Left cardiac atrium (tissue), 4 donors: ENCODE measurements at regions of chr17 and their contacts with region 1.

Region 1: GRCh38 chr17:4881761-4882555 is 17.4 kb upstream of the C17orf107 start:
- DNase-seq: peak; percentile 61
- ATAC-seq: peak; percentile 71 to 78

Region 2: GRCh38 chr17:4733073-4733531 is 148.9 kb before region 1 on chr17:
- intact Hi-C with region 1: loop called (anchors 5 to 10 kb)
- DNase-seq: no peak
- ATAC-seq: no peak

Region 3: GRCh38 chr17:4739122-4740024 is 142.6 kb before region 1 on chr17 and contains the starts of genes CXCL16 and ZMYND15:
- intact Hi-C with region 1: loop called (anchors 5 to 10 kb)
- DNase-seq: peak; percentile 68
- ATAC-seq: peak; percentile 76 to 77
- total RNA-seq, gene CXCL16: 6.5 to 8.2 TPM
- total RNA-seq, gene ZMYND15: 0.21 to 0.39 TPM

Region 4: GRCh38 chr17:4789901-4790704 is 91.9 kb before region 1 on chr17:
- intact Hi-C with region 1: loop called (anchors 5 kb)
- DNase-seq: peak; percentile 90
- ATAC-seq: peak; percentile 95

Region 5: DNA sequence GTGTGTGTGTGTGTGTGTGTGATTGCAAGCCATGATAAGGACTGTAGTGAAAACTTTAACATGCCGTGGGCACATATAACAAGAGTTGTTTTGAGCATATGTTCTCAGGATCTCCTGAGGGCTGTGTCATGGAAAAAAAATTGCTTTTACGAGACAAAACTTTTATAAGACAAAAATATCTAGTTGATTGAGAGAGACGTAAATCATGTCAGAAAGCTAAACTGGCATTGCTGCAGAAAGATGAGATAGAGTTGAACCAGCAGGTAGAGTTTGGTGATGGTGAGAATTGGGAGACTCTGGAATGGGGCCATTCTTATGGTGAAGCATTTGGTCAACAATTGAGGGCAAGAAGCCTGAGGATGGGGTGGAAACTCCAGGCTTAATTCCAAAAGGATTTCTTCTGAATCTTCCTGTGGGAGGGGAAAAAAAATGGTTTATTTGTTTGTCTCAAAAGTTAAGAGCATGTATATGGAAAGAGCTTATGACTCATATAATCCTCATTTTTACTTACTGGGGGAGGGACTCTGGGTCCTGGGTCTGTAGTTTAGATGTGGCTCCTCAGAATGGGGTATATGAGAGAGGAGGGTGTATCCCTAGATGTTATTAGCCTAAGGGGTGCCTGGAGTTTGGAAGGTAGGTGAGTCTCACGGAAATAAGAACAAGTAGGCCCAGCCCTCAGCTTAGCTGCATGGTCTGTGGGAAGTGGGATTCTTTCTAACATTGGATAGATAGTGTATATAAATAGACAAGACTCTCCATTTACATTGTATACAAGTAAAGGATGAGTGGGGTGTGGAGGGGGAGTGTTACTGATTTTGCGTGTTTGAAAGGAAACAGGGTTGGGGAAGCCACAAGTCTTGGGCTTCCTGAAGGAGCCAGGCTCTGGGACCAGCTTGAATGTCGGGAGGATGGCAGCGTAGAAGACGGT is 41.7 kb before region 1 on chr17:
- intact Hi-C with region 1: loop called in 1 of 2 experiments (anchors 5 kb)
- DNase-seq: no peak
- ATAC-seq: no peak

Region 6: DNA sequence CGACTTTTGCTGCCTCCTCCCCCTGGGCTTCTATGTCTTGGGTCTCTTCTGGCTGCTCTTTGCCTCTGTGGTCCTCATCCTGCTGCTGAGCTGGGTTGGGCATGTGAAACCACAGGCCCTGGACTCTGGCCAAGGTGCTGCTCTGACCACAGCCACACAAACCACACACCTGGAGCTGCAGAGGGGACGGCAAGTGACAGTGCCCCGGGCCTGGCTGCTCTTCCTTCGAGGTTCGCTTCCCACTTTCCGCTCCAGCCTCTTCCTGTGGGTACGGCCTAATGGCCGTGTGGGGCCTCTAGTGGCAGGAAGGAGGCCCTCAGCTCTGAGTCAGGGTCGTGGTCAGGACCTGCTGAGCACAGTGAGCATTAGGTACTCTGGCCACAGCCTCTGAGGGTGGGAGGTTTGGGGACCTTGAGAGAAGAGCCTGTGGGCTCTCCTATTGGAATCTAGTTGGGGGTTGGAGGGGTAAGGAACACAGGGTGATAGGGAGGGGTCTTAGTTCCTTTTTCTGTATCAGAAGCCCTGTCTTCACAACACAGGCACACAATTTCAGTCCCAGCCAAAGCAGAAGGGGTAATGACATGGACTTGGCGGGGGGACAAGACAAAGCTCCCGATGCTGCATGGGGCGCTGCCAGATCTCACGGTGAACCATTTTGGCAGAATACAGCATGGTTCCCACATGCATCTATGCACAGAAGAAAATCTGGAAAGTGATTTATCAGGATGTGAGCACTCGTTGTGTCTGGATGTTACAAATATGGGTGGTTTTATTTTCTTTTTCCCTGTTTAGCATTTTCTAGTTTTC is 52.4 kb after region 1 on chr17:
- intact Hi-C with region 1: no loop called
- DNase-seq: no peak
- ATAC-seq: peak; percentile 38 to 55